ENCODE measurements at regions of chr10 and their contacts with region 1.

Region 1: GRCh38 chr10:74176380-74177139 is 25.5 kb downstream of the ADK start:
- DNase-seq: peak; percentile 93
- ATAC-seq: peak; percentile 86
- H3K4me3 Mint-ChIP-seq: peak overlapping the region; percentile 89
- H3K27ac Mint-ChIP-seq: peak overlapping the region; percentile 94
- H3K4me1 Mint-ChIP-seq: peaks cover 40% of the 10 kb centered on the region
- H3K27me3 Mint-ChIP-seq: no peaks in the 10 kb centered on the region
- CTCF ChIP-seq: no peak

Region 2: GRCh38 chr10:74151056-74151878 is 25.3 kb before region 1 on chr10 and contains the start of gene ADK:
- CTCF ChIA-PET with region 1: interaction called, 4 read pairs
- POLR2A ChIA-PET with region 1: interaction called, 16 read pairs
- DNase-seq: peak; percentile 100
- ATAC-seq: peak; percentile 89
- H3K4me3 Mint-ChIP-seq: no peak within 1 kb of the TSS
- H3K27ac Mint-ChIP-seq: peak within 1 kb of the TSS; percentile 72; the same call in 1 of the 2 replicates
- H3K4me1 Mint-ChIP-seq: peaks cover 14% of the 10 kb centered on the region
- H3K27me3 Mint-ChIP-seq: no peaks in the 10 kb centered on the region
- CTCF ChIP-seq: no peak
- total RNA-seq, gene ADK: 30.2 to 32.7 TPM (median 32.5 TPM) in 3 replicates

Measured in WTC11 (cell line).